CD4-positive, alpha-beta T cell (primary cell): ENCODE measurements at regions of chr1 and their contacts with region 1.

Region 1: GRCh38 chr1:210332719-210333398 is 4.2 kb downstream of the HHAT start:
- DNase-seq: peak in 10 of 14 experiments; percentile 7 to 83 (median 43)
- ATAC-seq: peak; percentile 72
- H3K4me3 ChIP-seq: no peak overlapping the region
- H3K4me3 Mint-ChIP-seq: peak overlapping the region; percentile 22
- H3K27ac ChIP-seq: peak overlapping the region in 1 of 2 donors; percentile 68
- H3K27ac Mint-ChIP-seq: peak overlapping the region; percentile 83
- H3K4me1 ChIP-seq: peaks cover 40% of the 10 kb centered on the region
- H3K4me1 Mint-ChIP-seq: peaks cover 45% of the 10 kb centered on the region
- H3K27me3 ChIP-seq: no peaks in the 10 kb centered on the region
- H3K27me3 Mint-ChIP-seq: no peaks in the 10 kb centered on the region
- CTCF ChIP-seq: no peak

Region 2: GRCh38 chr1:210342986-210343780 is 10.3 kb after region 1 on chr1:
- CTCF ChIA-PET with region 1: interaction called, 4 read pairs
- POLR2A ChIA-PET with region 1: interaction called, 17 read pairs
- intact Hi-C with region 1: no loop called
- DNase-seq: peak in 1 of 14 experiments; percentile 34
- ATAC-seq: no peak
- H3K4me3 ChIP-seq: peak overlapping the region; percentile 34
- H3K4me3 Mint-ChIP-seq: no peak overlapping the region
- H3K27ac ChIP-seq: no peak overlapping the region
- H3K27ac Mint-ChIP-seq: no peak overlapping the region
- H3K4me1 ChIP-seq: peaks cover 18% of the 10 kb centered on the region
- H3K4me1 Mint-ChIP-seq: no peaks in the 10 kb centered on the region
- H3K27me3 ChIP-seq: no peaks in the 10 kb centered on the region
- H3K27me3 Mint-ChIP-seq: no peaks in the 10 kb centered on the region
- CTCF ChIP-seq: no peak

Region 3: DNA sequence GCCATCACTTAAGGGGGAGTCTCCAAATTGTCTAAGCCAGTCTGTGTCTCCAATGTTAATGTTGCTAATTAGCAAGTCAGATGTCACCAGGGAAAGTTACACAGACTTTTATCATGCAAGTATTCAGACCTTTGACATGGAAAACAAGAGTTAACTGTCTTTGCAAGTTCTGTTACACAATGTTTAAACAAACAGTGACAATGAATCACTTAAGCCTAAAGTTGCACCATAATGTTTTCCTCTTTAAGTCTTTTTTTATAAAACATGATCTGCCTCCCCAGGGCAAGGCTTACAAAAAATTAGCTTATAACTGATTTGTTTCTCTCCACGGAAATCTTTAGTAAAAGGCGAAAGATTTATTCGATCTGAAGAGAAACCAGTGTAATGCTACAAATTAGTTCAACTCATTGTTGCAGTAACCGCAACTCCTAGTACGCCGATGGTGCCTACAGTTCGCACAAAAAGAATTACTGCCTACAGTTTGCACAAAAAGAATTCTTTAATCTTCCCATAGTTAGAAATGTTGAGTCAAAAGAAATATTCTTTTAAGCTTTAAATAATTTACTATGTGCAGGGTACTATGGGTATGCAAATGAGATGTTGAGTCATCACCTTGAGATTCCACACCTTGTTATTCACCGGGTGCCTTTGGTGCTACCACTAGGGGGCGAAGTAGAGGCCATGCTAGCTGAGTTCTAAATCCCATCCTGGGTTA is 41.2 kb after region 1 on chr1:
- CTCF ChIA-PET with region 1: interaction called, 12 read pairs
- POLR2A ChIA-PET with region 1: interaction called, 4 read pairs
- intact Hi-C with region 1: no loop called
- DNase-seq: peak; percentile 13 to 84 (median 44)
- ATAC-seq: peak; percentile 85
- H3K4me3 ChIP-seq: no peak overlapping the region
- H3K4me3 Mint-ChIP-seq: no peak overlapping the region
- H3K27ac ChIP-seq: peak overlapping the region in 1 of 2 donors; percentile 49
- H3K27ac Mint-ChIP-seq: peak overlapping the region; percentile 84
- H3K4me1 ChIP-seq: peaks cover 2% of the 10 kb centered on the region
- H3K4me1 Mint-ChIP-seq: peaks cover 14% of the 10 kb centered on the region
- H3K27me3 ChIP-seq: no peaks in the 10 kb centered on the region
- H3K27me3 Mint-ChIP-seq: no peaks in the 10 kb centered on the region
- CTCF ChIP-seq: peak; percentile 65

Region 4: GRCh38 chr1:210415846-210416448 is 83.1 kb after region 1 on chr1:
- CTCF ChIA-PET with region 1: no interaction called
- POLR2A ChIA-PET with region 1: no interaction called
- intact Hi-C with region 1: no loop called
- DNase-seq: no peak
- ATAC-seq: no peak
- H3K4me3 ChIP-seq: no peak overlapping the region
- H3K4me3 Mint-ChIP-seq: no peak overlapping the region
- H3K27ac ChIP-seq: no peak overlapping the region
- H3K27ac Mint-ChIP-seq: no peak overlapping the region
- H3K4me1 ChIP-seq: no peaks in the 10 kb centered on the region
- H3K4me1 Mint-ChIP-seq: no peaks in the 10 kb centered on the region
- H3K27me3 ChIP-seq: no peaks in the 10 kb centered on the region
- H3K27me3 Mint-ChIP-seq: no peaks in the 10 kb centered on the region
- CTCF ChIP-seq: no peak